Naive thymus-derived CD4-positive, alpha-beta T cell (primary cell): ENCODE measurements at regions of chr17 and their contacts with region 1.

Region 1: DNA sequence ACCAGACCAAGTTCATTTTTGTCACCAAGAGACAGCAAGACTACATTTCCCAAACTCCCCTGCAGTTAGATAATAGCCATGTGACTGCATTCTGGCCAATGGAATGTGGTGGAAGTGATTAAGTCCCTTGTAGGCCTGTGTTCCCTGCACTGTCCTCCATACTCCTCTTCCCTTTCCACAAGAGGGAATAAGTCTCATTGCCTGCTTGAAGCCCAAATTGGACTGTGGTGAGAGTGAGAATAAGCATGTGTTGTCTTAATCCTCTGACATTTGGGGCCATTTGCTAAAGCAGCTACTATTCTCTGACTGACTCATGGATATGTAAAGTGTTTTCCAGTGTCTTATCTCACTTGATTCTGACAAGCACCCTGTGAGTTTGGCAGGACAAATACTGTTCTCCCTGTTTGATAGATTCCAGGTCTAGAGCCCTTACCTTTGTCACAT is 20.7 kb downstream of the PIK3R6 start:
- DNase-seq: peak in 1 of 9 donors; percentile 11
- ATAC-seq: no peak
- H3K4me3 ChIP-seq: no peak overlapping the region
- H3K4me3 Mint-ChIP-seq: no peak overlapping the region
- H3K27ac ChIP-seq: no peak overlapping the region
- H3K27ac Mint-ChIP-seq: no peak overlapping the region
- H3K4me1 ChIP-seq: no peaks in the 10 kb centered on the region
- H3K4me1 Mint-ChIP-seq: peaks cover 0 to 13% (median 0%) of the 10 kb centered on the region in 7 donors
- H3K27me3 ChIP-seq: no peaks in the 10 kb centered on the region
- H3K27me3 Mint-ChIP-seq: no peaks in the 10 kb centered on the region

Region 2: DNA sequence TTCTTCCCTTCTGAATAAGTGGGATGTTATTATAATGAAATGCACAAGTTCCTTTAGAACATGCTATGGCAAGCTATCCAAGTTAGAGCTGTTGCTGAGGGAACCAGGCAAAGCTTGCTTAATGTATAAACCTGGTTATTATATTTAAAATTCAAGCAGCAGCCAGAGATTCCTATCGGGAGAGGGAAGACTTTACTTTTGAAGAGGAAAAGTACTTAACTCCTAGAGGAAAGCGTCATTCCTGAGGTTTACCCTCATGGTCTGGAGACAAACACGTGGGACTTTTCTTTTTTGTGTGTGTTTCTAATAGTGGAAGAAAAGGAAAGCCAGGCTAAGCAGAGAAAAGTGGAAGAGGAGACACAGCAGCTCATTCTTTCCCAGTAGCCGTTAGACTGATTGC is 176.4 kb before region 1 on chr17:
- CTCF ChIA-PET with region 1: no interaction called
- POLR2A ChIA-PET with region 1: no interaction called
- intact Hi-C with region 1: no loop called
- DNase-seq: no peak
- ATAC-seq: no peak
- H3K4me3 ChIP-seq: no peak overlapping the region
- H3K4me3 Mint-ChIP-seq: no peak overlapping the region
- H3K27ac ChIP-seq: no peak overlapping the region
- H3K27ac Mint-ChIP-seq: no peak overlapping the region
- H3K4me1 ChIP-seq: no peaks in the 10 kb centered on the region
- H3K4me1 Mint-ChIP-seq: no peaks in the 10 kb centered on the region
- H3K27me3 ChIP-seq: no peaks in the 10 kb centered on the region
- H3K27me3 Mint-ChIP-seq: peaks cover 0 to 11% (median 4%) of the 10 kb centered on the region in 5 donors

Region 3: DNA sequence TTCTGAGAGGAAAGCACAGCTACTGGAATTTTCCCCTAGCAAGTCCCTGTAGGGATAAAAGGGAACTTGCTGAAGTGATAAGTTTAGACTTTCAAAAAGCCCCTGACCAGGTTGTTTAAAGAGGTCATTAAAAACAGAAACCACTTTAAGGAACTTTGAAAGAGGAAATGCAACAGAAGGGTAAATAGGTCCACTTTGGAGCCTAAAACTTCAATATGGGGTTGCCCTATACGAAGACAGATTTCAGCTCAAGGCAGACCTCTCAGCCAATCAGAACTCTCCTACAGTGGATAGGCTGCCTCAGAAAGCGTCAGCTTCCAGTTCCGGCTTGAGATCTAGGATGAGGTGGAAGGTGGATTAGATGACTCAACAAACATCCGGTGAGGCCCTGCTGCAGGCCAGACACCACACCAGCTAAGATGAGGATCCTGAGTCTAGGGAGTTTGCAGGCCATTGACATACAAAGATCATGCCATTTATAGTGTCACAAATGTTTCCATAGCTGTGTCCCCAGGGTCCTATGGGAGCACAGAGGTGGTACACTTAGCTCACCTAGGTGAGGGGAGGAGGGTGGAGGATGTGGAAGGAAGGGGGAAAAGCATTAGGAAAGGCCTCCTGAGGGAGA is 39.8 kb before region 1 on chr17:
- CTCF ChIA-PET with region 1: no interaction called
- POLR2A ChIA-PET with region 1: no interaction called
- intact Hi-C with region 1: no loop called
- DNase-seq: no peak
- ATAC-seq: peak; percentile 94
- H3K4me3 ChIP-seq: no peak overlapping the region
- H3K4me3 Mint-ChIP-seq: no peak overlapping the region
- H3K27ac ChIP-seq: no peak overlapping the region
- H3K27ac Mint-ChIP-seq: peak overlapping the region in 2 of 9 donors; percentile 17 to 38
- H3K4me1 ChIP-seq: no peaks in the 10 kb centered on the region
- H3K4me1 Mint-ChIP-seq: peaks cover 0 to 4% (median 0%) of the 10 kb centered on the region in 7 donors
- H3K27me3 ChIP-seq: no peaks in the 10 kb centered on the region
- H3K27me3 Mint-ChIP-seq: no peaks in the 10 kb centered on the region

Region 4: GRCh38 chr17:8868529-8868951 is 21.8 kb after region 1 on chr17:
- CTCF ChIA-PET with region 1: interaction called, 3 read pairs
- POLR2A ChIA-PET with region 1: no interaction called
- intact Hi-C with region 1: loop called in 1 of 2 experiments (anchors 1 kb)
- DNase-seq: no peak
- ATAC-seq: peak; percentile 54
- H3K4me3 ChIP-seq: no peak overlapping the region
- H3K4me3 Mint-ChIP-seq: peak overlapping the region in 4 of 10 donors; percentile 6 to 88 (median 40)
- H3K27ac ChIP-seq: no peak overlapping the region
- H3K27ac Mint-ChIP-seq: peak overlapping the region in 3 of 9 donors; percentile 18 to 92 (median 43)
- H3K4me1 ChIP-seq: peaks cover 7 to 16% of the 10 kb centered on the region in 2 donors
- H3K4me1 Mint-ChIP-seq: peaks cover 21 to 41% (median 34%) of the 10 kb centered on the region in 7 donors
- H3K27me3 ChIP-seq: no peaks in the 10 kb centered on the region
- H3K27me3 Mint-ChIP-seq: no peaks in the 10 kb centered on the region

Region 5: DNA sequence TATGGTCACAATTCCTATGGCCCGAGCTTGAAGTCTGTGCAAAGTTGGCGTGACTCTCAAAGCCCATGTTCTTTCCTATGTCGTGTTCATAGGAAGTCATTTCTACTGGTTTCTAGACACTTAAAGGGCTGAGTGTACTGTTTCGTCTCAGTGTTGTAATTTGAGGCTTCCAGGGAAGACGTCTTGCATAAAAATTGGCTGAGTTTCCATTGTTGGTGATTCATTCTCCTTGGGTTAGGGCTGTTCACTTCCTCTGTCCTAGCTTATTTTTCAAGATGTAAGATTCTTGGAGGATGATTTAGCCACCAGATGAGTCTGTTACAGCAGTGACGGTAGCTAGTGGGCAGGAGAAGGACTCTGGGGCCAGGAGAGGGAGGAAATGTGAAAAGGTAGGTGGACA is 75.7 kb after region 1 on chr17:
- CTCF ChIA-PET with region 1: no interaction called
- POLR2A ChIA-PET with region 1: no interaction called
- intact Hi-C with region 1: no loop called
- DNase-seq: no peak
- ATAC-seq: peak; percentile 79
- H3K4me3 ChIP-seq: no peak overlapping the region
- H3K4me3 Mint-ChIP-seq: no peak overlapping the region
- H3K27ac ChIP-seq: no peak overlapping the region
- H3K27ac Mint-ChIP-seq: peak overlapping the region in 6 of 9 donors; percentile 8 to 73 (median 46)
- H3K4me1 ChIP-seq: peaks cover 12 to 27% of the 10 kb centered on the region in 2 donors
- H3K4me1 Mint-ChIP-seq: peaks cover 6 to 32% (median 23%) of the 10 kb centered on the region in 7 donors
- H3K27me3 ChIP-seq: no peaks in the 10 kb centered on the region
- H3K27me3 Mint-ChIP-seq: no peaks in the 10 kb centered on the region